ENCODE measurements at regions of chr17 and their contacts with region 1.

Region 1: GRCh38 chr17:19867064-19867313 is 747 bp downstream of the ULK2 start:
- DNase-seq: peak; percentile 23 to 76 (median 44)
- ATAC-seq: peak; percentile 43
- H3K4me3 ChIP-seq: peak overlapping the region; percentile 66
- H3K4me3 Mint-ChIP-seq: peak overlapping the region; percentile 89
- H3K27ac ChIP-seq: peak overlapping the region in 1 of 2 donors; percentile 41
- H3K27ac Mint-ChIP-seq: peak overlapping the region; percentile 82
- H3K4me1 ChIP-seq: peaks cover 31% of the 10 kb centered on the region
- H3K4me1 Mint-ChIP-seq: peaks cover 51% of the 10 kb centered on the region
- H3K27me3 ChIP-seq: no peaks in the 10 kb centered on the region
- H3K27me3 Mint-ChIP-seq: no peaks in the 10 kb centered on the region
- CTCF ChIP-seq: no peak

Region 2: GRCh38 chr17:19569785-19570543 is 297.0 kb before region 1 on chr17:
- CTCF ChIA-PET with region 1: no interaction called
- POLR2A ChIA-PET with region 1: no interaction called
- intact Hi-C with region 1: no loop called
- DNase-seq: no peak
- ATAC-seq: no peak
- H3K4me3 ChIP-seq: no peak overlapping the region
- H3K4me3 Mint-ChIP-seq: no peak overlapping the region
- H3K27ac ChIP-seq: no peak overlapping the region
- H3K27ac Mint-ChIP-seq: no peak overlapping the region
- H3K4me1 ChIP-seq: peaks cover 6% of the 10 kb centered on the region
- H3K4me1 Mint-ChIP-seq: peaks cover 5% of the 10 kb centered on the region
- H3K27me3 ChIP-seq: no peaks in the 10 kb centered on the region
- H3K27me3 Mint-ChIP-seq: peaks cover 12% of the 10 kb centered on the region
- CTCF ChIP-seq: no peak

Region 3: DNA sequence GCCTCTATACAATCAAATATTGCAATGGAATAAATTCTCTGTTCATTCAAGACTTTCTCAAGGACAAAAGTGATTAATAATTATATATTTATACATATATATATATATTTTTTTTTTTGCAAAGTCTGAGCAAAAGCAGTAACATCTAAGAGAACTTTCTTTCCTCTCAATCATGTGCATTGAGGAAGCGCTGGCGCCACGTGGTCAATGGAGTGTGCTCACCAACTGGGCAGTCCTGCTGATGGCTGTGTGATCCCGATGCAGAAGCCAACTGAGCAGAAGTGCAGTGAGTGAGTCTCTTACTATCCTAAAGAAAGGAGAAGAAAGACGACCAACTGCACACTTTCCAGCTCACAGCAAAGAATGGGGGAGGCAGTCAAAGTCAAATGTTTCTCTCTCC is 37.9 kb after region 1 on chr17:
- CTCF ChIA-PET with region 1: no interaction called
- POLR2A ChIA-PET with region 1: interaction called, 3 read pairs
- intact Hi-C with region 1: loop called in 1 of 2 experiments (anchors 5 kb)
- DNase-seq: peak in 2 of 14 experiments; percentile 13 to 21
- ATAC-seq: no peak
- H3K4me3 ChIP-seq: no peak overlapping the region
- H3K4me3 Mint-ChIP-seq: no peak overlapping the region
- H3K27ac ChIP-seq: no peak overlapping the region
- H3K27ac Mint-ChIP-seq: no peak overlapping the region
- H3K4me1 ChIP-seq: no peaks in the 10 kb centered on the region
- H3K4me1 Mint-ChIP-seq: no peaks in the 10 kb centered on the region
- H3K27me3 ChIP-seq: no peaks in the 10 kb centered on the region
- H3K27me3 Mint-ChIP-seq: no peaks in the 10 kb centered on the region
- CTCF ChIP-seq: no peak

Region 4: GRCh38 chr17:19928299-19928698 is 61.3 kb after region 1 on chr17:
- CTCF ChIA-PET with region 1: no interaction called
- POLR2A ChIA-PET with region 1: interaction called, 4 read pairs
- intact Hi-C with region 1: loop called in 1 of 2 experiments (anchors 5 kb)
- DNase-seq: no peak
- ATAC-seq: no peak
- H3K4me3 ChIP-seq: no peak overlapping the region
- H3K4me3 Mint-ChIP-seq: no peak overlapping the region
- H3K27ac ChIP-seq: no peak overlapping the region
- H3K27ac Mint-ChIP-seq: no peak overlapping the region
- H3K4me1 ChIP-seq: no peaks in the 10 kb centered on the region
- H3K4me1 Mint-ChIP-seq: peaks cover 5% of the 10 kb centered on the region
- H3K27me3 ChIP-seq: no peaks in the 10 kb centered on the region
- H3K27me3 Mint-ChIP-seq: no peaks in the 10 kb centered on the region
- CTCF ChIP-seq: no peak

Region 5: GRCh38 chr17:19940722-19941464 is 73.9 kb after region 1 on chr17:
- CTCF ChIA-PET with region 1: no interaction called
- POLR2A ChIA-PET with region 1: interaction called, 3 read pairs
- intact Hi-C with region 1: loop called in 1 of 2 experiments (anchors 10 kb)
- DNase-seq: no peak
- ATAC-seq: no peak
- H3K4me3 ChIP-seq: no peak overlapping the region
- H3K4me3 Mint-ChIP-seq: no peak overlapping the region
- H3K27ac ChIP-seq: no peak overlapping the region
- H3K27ac Mint-ChIP-seq: peak overlapping the region; percentile 48
- H3K4me1 ChIP-seq: peaks cover 6% of the 10 kb centered on the region
- H3K4me1 Mint-ChIP-seq: peaks cover 46% of the 10 kb centered on the region
- H3K27me3 ChIP-seq: no peaks in the 10 kb centered on the region
- H3K27me3 Mint-ChIP-seq: no peaks in the 10 kb centered on the region
- CTCF ChIP-seq: no peak

Region 6: GRCh38 chr17:19977311-19978208 is 110.6 kb after region 1 on chr17 and contains the start of gene AKAP10:
- CTCF ChIA-PET with region 1: no interaction called
- POLR2A ChIA-PET with region 1: interaction called, 12 read pairs
- intact Hi-C with region 1: loop called in 1 of 2 experiments (anchors 5 kb)
- DNase-seq: peak; percentile 85 to 94 (median 91)
- ATAC-seq: peak; percentile 83
- H3K4me3 ChIP-seq: peak within 1 kb of the TSS; percentile 83
- H3K4me3 Mint-ChIP-seq: peak within 1 kb of the TSS; percentile 99
- H3K27ac ChIP-seq: peak within 1 kb of the TSS; percentile 83 to 85
- H3K27ac Mint-ChIP-seq: peak within 1 kb of the TSS; percentile 97
- H3K4me1 ChIP-seq: peaks cover 43% of the 10 kb centered on the region
- H3K4me1 Mint-ChIP-seq: peaks cover 59% of the 10 kb centered on the region
- H3K27me3 ChIP-seq: no peaks in the 10 kb centered on the region
- H3K27me3 Mint-ChIP-seq: no peaks in the 10 kb centered on the region
- CTCF ChIP-seq: no peak
- total RNA-seq, gene AKAP10: 29.2 to 36.0 TPM

Measured in CD4-positive, alpha-beta T cell (primary cell).